Activated CD4-positive, alpha-beta T cell treated with anti-CD3 and anti-CD28 coated beads, Interleukin-2, amount 10 ng/mL, durations not matched to agents 7 days and 5 days (primary cell): ENCODE measurements at regions of chr11 and their contacts with region 1.

Region 1: GRCh38 chr11:695538-696248 is at the start of gene TMEM80:
- DNase-seq: peak; percentile 99
- H3K4me3 Mint-ChIP-seq: peak within 1 kb of the TSS; percentile 82
- H3K27ac Mint-ChIP-seq: peak within 1 kb of the TSS; percentile 94
- H3K4me1 Mint-ChIP-seq: peaks cover 57% of the 10 kb centered on the region
- H3K27me3 Mint-ChIP-seq: no peaks in the 10 kb centered on the region
- total RNA-seq, gene TMEM80: 39.1 to 44.7 TPM

Region 2: DNA sequence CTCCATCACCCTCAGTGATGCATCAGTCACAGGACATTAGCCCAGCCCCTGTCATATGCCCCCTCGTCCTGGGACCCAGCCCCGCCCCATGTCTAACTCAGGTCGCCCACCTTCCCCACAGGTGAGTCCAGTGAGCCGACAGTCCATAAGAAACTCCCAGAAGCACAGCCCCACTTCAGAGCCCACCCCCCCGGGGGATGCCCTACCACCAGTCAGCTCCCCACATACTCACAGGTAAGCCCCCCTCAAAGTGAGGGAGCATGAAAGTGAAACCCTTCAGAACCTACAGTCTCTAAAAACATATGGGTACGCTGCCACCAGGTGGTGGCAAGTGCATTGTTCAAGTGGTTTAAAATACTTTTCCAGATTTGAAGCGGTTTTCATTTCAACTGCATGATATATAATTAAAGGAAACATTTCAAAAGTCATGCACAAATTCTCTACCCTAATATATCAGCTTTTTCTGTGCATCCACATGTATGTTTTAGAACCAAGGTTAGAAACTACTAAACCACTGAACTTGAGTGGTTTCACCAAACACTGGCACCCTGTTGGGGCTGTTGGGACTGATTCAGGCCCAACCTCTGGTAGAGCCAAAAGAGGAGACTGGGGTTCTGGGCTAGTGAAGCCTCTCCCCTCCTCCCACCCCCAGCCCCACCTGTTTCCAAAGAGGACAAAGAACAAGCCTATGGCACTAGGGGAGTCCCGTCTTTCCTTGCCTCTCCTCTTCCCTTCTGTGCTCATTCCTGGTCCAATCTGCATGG is 27.6 kb after region 1 on chr11:
- CTCF ChIA-PET with region 1: interaction called, 16 read pairs
- POLR2A ChIA-PET with region 1: no interaction called
- DNase-seq: peak; percentile 72
- H3K4me3 Mint-ChIP-seq: no peak overlapping the region
- H3K27ac Mint-ChIP-seq: peak overlapping the region; percentile 78
- H3K4me1 Mint-ChIP-seq: peaks cover 21% of the 10 kb centered on the region
- H3K27me3 Mint-ChIP-seq: peaks cover 27% of the 10 kb centered on the region

Region 3: GRCh38 chr11:737371-737770 is 41.7 kb after region 1 on chr11:
- CTCF ChIA-PET with region 1: no interaction called
- POLR2A ChIA-PET with region 1: no interaction called
- DNase-seq: no peak
- H3K4me3 Mint-ChIP-seq: peak overlapping the region; percentile 41
- H3K27ac Mint-ChIP-seq: peak overlapping the region; percentile 77
- H3K4me1 Mint-ChIP-seq: peaks cover 24% of the 10 kb centered on the region
- H3K27me3 Mint-ChIP-seq: peaks cover 2% of the 10 kb centered on the region

Region 4: GRCh38 chr11:765025-765801 is 69.5 kb after region 1 on chr11:
- CTCF ChIA-PET with region 1: no interaction called
- POLR2A ChIA-PET with region 1: no interaction called
- DNase-seq: peak; percentile 69
- H3K4me3 Mint-ChIP-seq: no peak overlapping the region
- H3K27ac Mint-ChIP-seq: no peak overlapping the region
- H3K4me1 Mint-ChIP-seq: peaks cover 4% of the 10 kb centered on the region
- H3K27me3 Mint-ChIP-seq: no peaks in the 10 kb centered on the region